AG04449 (cell line): ENCODE measurements at regions of chr9 and their contacts with region 1.

Region 1: DNA sequence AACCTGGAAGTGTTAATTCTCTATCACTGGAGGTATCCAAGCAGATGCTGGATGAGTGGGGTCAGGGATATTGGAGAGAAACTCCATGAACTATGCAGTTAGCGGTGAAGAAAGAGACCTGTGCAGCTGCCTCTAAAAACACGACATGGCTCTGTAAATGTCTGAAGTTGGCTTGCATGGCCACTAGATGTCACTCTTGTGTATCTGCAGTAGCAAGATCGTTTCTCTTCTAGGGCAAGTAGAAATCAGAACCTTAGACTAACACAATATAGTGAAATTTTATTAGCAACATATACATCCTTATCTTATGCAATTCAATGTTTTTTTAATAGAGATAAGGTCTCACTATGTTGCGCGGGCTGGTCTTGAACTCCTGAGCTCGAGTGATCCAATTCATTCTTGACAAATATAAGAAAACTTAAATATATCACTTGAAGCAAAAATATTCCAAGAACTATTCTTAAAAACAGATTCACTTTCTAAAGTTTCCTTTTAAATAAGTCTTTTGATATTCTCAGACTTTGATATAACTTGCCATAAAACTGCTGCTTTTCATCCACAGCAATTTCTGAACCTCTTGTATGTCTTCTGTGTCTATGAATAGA is 2.9 kb downstream of the OR2S2 start:
- DNase-seq: peak; percentile 57
- H3K4me3 ChIP-seq: no peak overlapping the region
- CTCF ChIP-seq: peak; percentile 81

Region 2: DNA sequence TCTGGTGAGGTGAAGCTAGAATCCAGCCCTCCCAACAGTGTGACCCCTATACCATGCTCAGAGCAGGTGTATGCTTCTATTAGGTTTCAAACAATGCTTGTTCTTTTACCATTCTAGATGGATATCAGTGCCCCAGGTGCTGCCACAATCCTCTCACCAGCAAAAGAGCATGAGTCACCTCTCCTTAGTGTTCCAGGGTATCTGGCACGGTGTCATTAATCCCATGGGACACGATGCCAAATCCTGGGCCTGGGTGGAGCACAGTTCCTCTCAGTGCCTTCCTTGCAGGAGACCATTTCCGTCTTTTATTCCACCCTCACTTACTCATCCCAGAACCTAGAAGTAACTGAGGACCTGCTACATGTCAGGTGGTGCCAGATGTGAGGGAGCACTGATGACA is 83.5 kb before region 1 on chr9:
- CTCF ChIA-PET with region 1: no interaction called
- POLR2A ChIA-PET with region 1: no interaction called
- DNase-seq: no peak
- H3K4me3 ChIP-seq: no peak overlapping the region
- CTCF ChIP-seq: no peak

Region 3: GRCh38 chr9:36008774-36009300 is 53.8 kb after region 1 on chr9:
- CTCF ChIA-PET with region 1: interaction called, 342 read pairs
- POLR2A ChIA-PET with region 1: no interaction called
- DNase-seq: no peak
- H3K4me3 ChIP-seq: no peak overlapping the region
- CTCF ChIP-seq: peak; percentile 75

Region 4: GRCh38 chr9:36036780-36037548 is 81.9 kb after region 1 on chr9 and contains the start of gene RECK:
- CTCF ChIA-PET with region 1: interaction called, 13 read pairs
- POLR2A ChIA-PET with region 1: interaction called, 7 read pairs
- DNase-seq: no peak
- H3K4me3 ChIP-seq: peak within 1 kb of the TSS; percentile 60
- CTCF ChIP-seq: no peak

Region 5: DNA sequence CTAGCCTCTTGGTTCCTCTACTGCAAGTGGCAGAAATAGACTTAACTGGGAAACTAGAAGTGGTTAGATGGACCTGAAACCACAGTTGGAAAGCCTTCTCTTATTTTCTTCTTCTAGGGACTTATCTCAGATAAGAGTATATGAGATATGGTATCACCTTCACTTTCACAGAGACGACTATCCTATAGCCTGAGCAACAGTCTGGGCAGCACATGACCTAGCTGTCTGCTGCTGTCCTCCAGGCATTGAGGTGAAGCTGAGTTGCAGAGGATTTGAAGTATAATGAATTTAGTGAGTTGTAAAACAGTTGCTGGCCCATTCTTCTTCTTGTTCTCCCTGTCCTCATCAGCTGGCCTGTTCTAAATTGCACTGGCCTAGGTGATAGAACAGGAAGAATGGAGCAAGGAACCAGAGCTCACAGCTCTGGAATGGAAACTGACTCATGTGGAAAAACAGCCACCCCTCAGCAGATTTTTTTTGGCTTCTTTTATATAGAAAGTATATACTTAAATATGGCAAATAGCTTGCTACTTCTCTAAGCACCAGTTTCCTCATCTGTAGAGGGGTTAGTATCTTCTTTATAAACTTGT is 109.5 kb after region 1 on chr9:
- CTCF ChIA-PET with region 1: interaction called, 14 read pairs
- POLR2A ChIA-PET with region 1: no interaction called
- DNase-seq: no peak
- H3K4me3 ChIP-seq: no peak overlapping the region
- CTCF ChIP-seq: no peak

Region 6: DNA sequence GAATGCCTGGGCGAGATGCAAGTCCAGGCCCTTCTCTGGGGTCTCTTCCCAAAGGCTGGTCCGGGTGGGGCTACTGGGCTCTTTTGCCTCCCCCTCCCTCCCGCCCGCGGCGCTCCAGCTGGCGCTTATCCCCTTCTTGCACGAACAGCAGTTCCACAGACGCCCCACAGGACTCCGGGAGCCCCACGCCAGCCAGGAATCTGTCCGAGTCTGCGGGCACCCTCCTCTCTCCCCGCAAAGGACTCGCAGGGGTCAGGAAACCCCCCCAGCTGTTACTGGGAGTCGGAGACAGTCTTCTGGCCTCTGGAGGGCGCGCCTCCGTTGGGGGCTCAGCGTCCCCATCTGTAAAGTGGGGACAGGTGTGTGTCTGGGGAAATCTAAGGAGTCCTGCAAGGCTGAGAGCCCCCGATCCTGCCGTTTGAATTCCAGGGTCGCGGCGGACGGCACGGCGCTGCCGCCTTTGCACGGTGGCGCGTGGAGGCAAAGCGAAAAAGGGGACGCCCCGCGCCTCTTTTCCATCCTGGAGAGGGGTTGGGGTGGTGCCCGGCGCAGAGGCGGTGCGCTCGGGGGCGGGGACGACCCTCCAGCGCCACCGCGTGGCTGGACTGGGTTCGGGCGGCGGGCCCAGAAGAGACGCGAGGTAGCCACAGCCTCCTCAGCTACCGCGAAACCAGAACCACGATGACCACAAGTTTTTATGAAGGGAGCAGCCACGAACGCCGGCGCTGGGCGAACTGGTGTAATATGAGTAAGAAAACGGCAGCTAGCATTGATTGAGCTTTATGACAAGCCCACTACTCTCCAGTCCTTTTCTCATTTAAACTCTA is 211.3 kb after region 1 on chr9:
- CTCF ChIA-PET with region 1: interaction called, 20 read pairs
- POLR2A ChIA-PET with region 1: no interaction called
- DNase-seq: no peak
- H3K4me3 ChIP-seq: peak overlapping the region; percentile 63
- CTCF ChIP-seq: peak; percentile 95

Region 7: GRCh38 chr9:36803961-36804360 is 848.9 kb after region 1 on chr9:
- CTCF ChIA-PET with region 1: no interaction called
- POLR2A ChIA-PET with region 1: no interaction called
- DNase-seq: no peak
- H3K4me3 ChIP-seq: no peak overlapping the region
- CTCF ChIP-seq: no peak